ENCODE measurements at regions of chr6 and their contacts with region 1.

Region 1: DNA sequence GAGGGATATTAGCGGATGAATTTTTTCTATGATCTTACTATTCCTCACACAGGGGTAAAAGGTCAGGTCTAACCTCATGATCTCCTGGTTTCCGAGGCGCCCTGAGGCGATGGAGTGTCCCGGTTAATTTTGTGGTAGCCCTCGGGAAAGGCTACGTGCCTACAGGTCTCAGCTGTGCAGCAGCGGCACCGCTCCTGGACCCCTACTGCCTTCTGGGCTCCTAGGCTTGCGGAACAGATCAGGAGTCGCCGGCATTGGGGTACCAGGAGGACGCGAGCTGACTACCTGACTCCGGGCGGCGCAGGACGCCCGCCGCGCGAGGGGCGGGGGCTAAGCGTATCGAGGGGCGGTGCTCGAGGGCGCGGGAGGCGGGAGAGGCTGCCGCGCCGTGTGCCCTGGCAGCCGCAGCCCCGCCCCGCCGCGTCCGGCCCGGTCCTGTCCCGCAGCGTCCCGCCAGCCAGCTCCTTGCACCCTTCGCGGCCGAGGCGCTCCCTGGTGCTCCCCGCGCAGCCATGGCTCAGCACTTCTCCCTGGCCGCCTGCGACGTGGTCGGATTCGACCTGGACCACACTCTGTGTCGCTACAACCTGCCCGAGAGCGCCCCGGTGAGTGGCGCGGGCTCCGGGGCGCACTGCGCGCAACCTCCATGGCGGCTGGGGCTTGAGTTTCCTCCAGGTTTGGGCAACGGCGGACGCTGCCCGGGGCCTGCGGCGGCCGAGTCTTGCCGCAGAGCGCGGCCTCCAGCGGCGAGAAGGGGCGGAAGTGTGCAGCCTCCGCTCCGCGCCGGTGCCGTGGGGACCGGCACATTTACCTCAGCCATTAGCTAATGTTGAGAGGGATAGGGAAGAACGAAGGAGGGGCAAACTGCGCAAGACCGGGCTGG is at the start of gene NT5DC1:
- DNase-seq: peak; percentile 88
- ATAC-seq: peak; percentile 92
- H3K4me3 Mint-ChIP-seq: peak within 1 kb of the TSS; percentile 92
- H3K27ac Mint-ChIP-seq: peak within 1 kb of the TSS; percentile 92
- H3K4me1 Mint-ChIP-seq: peaks cover 45% of the 10 kb centered on the region
- H3K27me3 Mint-ChIP-seq: no peaks in the 10 kb centered on the region
- CTCF ChIP-seq: peak; percentile 36
- total RNA-seq, gene NT5DC1: 47.8 to 53.3 TPM

Region 2: GRCh38 chr6:116010790-116011401 is 89.8 kb before region 1 on chr6:
- CTCF ChIA-PET with region 1: interaction called, 24 read pairs
- POLR2A ChIA-PET with region 1: interaction called, 5 read pairs
- intact Hi-C with region 1: loop called (anchors 2 kb)
- DNase-seq: peak; percentile 71
- ATAC-seq: peak; percentile 38
- H3K4me3 Mint-ChIP-seq: no peak overlapping the region
- H3K27ac Mint-ChIP-seq: no peak overlapping the region
- H3K4me1 Mint-ChIP-seq: peaks cover 9% of the 10 kb centered on the region
- H3K27me3 Mint-ChIP-seq: peaks cover 21% of the 10 kb centered on the region
- CTCF ChIP-seq: peak; percentile 67

Region 3: DNA sequence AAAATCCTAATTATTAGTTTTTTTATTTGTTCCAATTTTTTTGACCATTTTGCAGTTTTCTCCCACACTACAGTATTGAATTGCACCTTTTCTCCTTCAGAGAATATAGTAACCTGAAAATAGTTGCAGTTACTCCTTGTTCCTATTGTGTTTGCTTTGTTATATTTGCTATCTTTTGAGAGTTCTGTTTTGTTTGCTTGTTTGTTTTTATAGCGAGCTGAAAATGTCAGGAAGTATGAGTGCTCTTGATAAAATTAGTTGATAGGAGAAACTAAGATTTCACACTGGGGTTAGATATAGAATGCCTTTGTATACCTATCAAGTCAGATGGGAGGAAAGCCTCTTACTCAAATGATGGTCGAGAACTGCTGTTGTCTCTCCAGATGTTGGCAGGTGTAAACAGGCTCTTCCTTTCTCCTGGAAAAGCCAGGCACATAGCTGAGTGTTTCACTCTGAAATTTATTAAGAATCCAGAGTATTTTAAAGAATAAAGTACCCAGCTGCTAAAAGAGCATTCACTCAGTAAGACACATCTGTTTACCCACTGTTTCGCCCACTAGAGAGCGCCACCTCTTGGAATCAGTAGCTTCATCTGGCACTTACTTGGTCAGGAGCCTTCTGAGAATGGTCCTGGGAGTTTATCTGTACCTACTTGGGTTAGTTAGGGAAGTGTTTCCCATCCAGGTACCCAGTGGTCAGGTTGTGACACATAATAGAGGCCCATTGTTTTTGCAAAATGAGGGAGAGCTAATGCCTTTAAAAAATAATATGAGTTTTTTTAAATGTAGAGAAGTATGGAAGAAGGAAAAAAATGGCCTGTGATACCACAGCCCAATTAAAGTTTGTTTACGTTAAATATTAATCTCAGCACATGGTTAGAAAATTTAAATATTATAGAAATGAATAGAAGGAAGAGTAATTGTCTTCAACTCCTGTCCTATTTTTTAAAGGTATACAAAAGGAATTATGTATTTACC is 11.2 kb after region 1 on chr6:
- CTCF ChIA-PET with region 1: interaction called, 33 read pairs
- POLR2A ChIA-PET with region 1: interaction called, 6 read pairs
- intact Hi-C with region 1: no loop called
- DNase-seq: peak; percentile 69
- ATAC-seq: peak; percentile 66
- H3K4me3 Mint-ChIP-seq: no peak overlapping the region
- H3K27ac Mint-ChIP-seq: no peak overlapping the region
- H3K4me1 Mint-ChIP-seq: no peaks in the 10 kb centered on the region
- H3K27me3 Mint-ChIP-seq: no peaks in the 10 kb centered on the region
- CTCF ChIP-seq: peak; percentile 57

Region 4: DNA sequence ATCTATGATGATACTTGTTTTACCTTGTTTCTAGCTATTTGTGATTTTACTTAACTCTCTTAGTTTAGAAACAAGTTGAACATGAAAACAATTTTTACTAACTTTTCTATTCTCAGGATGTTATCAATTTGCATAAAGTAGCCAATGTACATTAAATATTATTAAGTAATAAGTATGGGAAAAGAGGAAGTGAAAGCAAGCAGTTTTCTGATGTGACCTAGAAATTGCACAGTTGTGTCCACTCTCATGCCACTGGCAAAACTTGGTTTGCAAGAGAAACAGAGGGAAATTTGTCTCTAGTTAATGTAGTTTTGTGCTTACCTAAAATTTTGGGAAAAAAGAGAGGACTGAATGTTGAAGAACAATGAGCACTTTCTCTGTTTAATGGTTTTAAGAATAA is 198.3 kb after region 1 on chr6:
- CTCF ChIA-PET with region 1: no interaction called
- POLR2A ChIA-PET with region 1: no interaction called
- intact Hi-C with region 1: no loop called
- DNase-seq: no peak
- ATAC-seq: no peak
- H3K4me3 Mint-ChIP-seq: no peak overlapping the region
- H3K27ac Mint-ChIP-seq: no peak overlapping the region
- H3K4me1 Mint-ChIP-seq: no peaks in the 10 kb centered on the region
- H3K27me3 Mint-ChIP-seq: no peaks in the 10 kb centered on the region
- CTCF ChIP-seq: no peak

Region 5: GRCh38 chr6:116314878-116315277 is 214.2 kb after region 1 on chr6:
- CTCF ChIA-PET with region 1: no interaction called
- POLR2A ChIA-PET with region 1: no interaction called
- intact Hi-C with region 1: no loop called
- DNase-seq: no peak
- ATAC-seq: no peak
- H3K4me3 Mint-ChIP-seq: no peak overlapping the region
- H3K27ac Mint-ChIP-seq: no peak overlapping the region
- H3K4me1 Mint-ChIP-seq: peaks cover 2% of the 10 kb centered on the region
- H3K27me3 Mint-ChIP-seq: no peaks in the 10 kb centered on the region
- CTCF ChIP-seq: no peak

Region 6: DNA sequence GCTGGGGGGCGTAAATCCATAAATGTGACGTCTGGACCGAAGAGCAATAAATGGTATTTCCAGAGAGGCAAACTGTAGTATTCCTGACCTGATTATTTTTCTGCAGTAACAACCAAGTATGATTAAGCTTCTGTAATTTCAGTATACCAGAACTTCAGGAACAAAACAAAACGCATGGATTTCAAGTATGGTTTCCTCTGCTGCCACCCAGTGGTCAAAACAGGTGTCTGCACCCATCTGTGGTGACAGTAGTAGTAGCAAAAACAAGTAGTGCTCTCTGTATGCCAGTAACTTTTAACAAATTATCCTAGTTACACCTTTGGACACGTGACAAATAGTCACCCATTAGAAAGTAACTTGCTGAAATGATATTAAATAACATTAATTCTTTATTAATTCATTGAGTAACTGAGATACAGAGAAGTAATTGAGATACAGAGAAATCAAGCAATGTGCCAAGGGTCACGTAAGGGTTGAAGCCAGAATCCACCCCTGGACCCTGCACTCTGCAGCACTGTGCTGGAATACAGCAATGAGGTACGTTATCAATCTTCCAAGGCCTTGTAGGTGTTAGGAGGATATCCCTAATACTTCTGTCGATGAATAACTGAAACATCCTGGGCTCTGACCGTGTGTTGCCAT is 460.8 kb after region 1 on chr6:
- CTCF ChIA-PET with region 1: no interaction called
- POLR2A ChIA-PET with region 1: no interaction called
- intact Hi-C with region 1: no loop called
- DNase-seq: peak; percentile 84
- ATAC-seq: peak; percentile 83
- H3K4me3 Mint-ChIP-seq: no peak overlapping the region
- H3K27ac Mint-ChIP-seq: no peak overlapping the region
- H3K4me1 Mint-ChIP-seq: no peaks in the 10 kb centered on the region
- H3K27me3 Mint-ChIP-seq: peaks cover 2% of the 10 kb centered on the region
- CTCF ChIP-seq: peak; percentile 82